ENCODE measurements at regions of chrX and their contacts with region 1.

Region 1: DNA sequence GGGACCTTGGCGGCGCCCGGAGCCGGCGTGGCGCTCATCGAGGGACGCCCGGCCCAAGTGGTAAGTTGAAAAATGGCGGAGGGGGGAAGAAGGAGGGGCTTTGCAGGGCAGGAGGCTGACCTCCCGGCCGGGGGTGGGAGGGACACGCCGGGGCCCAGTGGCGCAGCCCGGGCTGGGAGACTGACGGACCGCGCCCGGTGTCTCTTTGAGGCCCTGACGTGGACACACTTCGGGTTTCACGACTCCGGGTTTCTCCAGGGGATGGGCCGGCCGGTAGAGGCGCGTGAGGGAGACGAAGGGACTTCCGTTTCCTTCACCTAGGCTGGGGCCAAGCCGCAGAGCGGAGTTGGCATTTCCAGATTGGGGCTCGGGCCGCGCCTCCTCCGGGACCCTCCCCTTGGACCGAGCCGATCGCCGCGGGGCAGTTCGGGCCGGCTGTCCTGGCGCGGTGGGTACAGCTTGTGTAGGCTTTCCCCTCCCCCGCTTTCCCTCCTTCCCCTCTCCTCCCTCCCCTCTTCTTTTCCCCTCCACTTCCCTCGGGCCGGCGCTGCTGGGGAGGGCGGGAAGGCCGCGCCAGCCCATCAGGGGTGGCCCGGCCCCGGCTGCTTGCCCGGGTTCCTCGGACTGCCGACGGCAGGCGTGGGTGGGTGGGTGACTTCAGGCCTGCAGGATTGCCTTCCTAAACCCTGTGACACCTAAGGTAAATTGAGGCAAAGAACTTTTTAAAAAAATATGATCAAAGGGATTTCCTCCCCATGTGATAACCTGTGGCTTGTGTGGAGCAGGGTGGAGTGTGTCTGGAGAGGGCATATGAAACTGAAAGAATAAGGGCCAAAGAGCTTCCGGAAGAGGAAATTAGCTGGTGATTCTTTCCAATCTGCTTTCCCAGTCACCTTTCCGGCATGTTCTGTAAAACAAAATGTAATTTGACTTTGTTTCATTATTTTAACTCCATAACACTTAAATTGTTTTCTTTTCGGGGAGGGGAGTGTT is at the start of gene XIAP:
- DNase-seq: peak; percentile 90
- H3K4me3 Mint-ChIP-seq: peak within 1 kb of the TSS; percentile 84
- H3K27ac Mint-ChIP-seq: peak within 1 kb of the TSS; percentile 92
- H3K4me1 Mint-ChIP-seq: peaks cover 5% of the 10 kb centered on the region
- H3K27me3 Mint-ChIP-seq: no peaks in the 10 kb centered on the region
- total RNA-seq, gene XIAP: 34.7 and 36.3 TPM in 2 replicates

Region 2: DNA sequence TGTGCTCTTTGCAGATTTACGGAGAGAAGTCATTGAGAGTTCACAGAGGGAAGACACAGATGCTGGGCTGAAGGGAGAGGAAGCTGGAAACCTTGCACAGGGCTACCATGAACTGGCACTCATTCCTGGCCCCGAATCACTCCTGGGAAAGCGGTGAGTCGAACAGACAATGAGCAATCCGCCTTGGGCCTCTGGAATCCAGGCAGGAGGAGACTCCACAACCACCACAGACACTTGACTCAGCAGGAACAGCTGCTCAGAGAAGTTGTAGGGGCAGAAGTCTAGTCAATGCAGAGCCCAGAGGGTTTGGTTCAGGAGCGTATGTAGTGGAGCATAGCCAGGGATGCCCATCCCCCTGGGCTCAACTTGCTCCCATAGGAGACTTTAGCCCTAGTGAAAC is 738.9 kb before region 1 on chrX:
- intact Hi-C with region 1: no loop called
- DNase-seq: no peak
- H3K4me3 Mint-ChIP-seq: no peak overlapping the region
- H3K27ac Mint-ChIP-seq: no peak overlapping the region
- H3K4me1 Mint-ChIP-seq: no peaks in the 10 kb centered on the region
- H3K27me3 Mint-ChIP-seq: no peaks in the 10 kb centered on the region

Region 3: DNA sequence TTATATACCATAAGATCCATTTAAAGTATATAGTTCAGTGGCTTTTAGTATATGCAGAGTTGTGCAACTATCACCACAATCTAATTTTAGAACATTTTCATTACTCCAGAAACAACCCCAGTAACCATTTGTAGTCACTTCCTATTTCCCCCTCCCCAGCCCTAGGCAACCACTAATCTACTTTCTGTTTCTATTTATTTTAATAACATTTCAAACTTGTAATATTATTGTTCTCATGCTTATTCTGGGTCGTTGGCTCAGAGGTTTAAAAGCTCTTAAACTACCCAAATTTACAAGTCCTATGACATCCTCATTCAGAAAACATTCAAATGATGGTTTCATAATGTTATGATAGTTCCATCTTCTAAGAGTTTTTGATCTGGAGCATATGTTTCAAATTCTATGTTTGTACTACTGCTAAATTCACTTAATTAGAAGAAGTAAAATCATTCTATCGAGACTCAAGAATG is 18.1 kb after region 1 on chrX:
- intact Hi-C with region 1: loop called (anchors 1 kb)
- DNase-seq: peak; percentile 60
- H3K4me3 Mint-ChIP-seq: peak overlapping the region; percentile 57
- H3K27ac Mint-ChIP-seq: peak overlapping the region; percentile 80
- H3K4me1 Mint-ChIP-seq: peaks cover 16% of the 10 kb centered on the region
- H3K27me3 Mint-ChIP-seq: no peaks in the 10 kb centered on the region

Region 4: DNA sequence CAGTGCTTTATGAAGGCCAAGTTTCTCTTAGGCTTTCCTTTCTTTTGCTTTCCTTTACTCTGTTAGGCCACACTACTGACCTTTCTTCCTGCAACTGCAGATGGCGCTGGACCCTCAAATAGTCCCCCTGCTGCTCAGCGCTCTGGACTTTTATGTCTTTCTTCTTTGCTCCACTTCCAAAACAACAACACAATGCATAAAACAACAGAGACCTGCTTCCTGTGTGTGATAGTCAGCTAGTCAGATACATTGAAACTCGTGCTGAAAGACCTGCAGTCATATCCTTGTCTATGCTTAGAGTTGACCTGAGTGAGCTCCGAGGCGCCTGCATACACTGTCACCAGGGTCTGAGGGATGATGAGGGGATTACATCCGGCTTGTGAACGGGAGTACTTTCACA is 363.4 kb after region 1 on chrX:
- intact Hi-C with region 1: no loop called
- DNase-seq: peak; percentile 58
- H3K4me3 Mint-ChIP-seq: peak overlapping the region; percentile 50
- H3K27ac Mint-ChIP-seq: peak overlapping the region; percentile 63
- H3K4me1 Mint-ChIP-seq: peaks cover 38% of the 10 kb centered on the region
- H3K27me3 Mint-ChIP-seq: no peaks in the 10 kb centered on the region

Measured in activated CD4-positive, alpha-beta T cell treated with anti-CD3 and anti-CD28 coated beads, Interleukin-2, amount 10 ng/mL, durations not matched to agents 24 days and 14 days (primary cell).